H1 (cell line): ENCODE measurements at regions of chr9 and their contacts with region 1.

Region 1: GRCh38 chr9:121698627-121699570 is 47.5 kb downstream of the DAB2IP start:
- DNase-seq: peak in 1 of 2 experiments; percentile 86
- H3K4me3 ChIP-seq: peak overlapping the region; percentile 54 to 68 (median 61)
- H3K27ac ChIP-seq: no peak overlapping the region
- H3K4me1 ChIP-seq: peaks cover 4 to 13% (median 12%) of the 10 kb centered on the region in 4 experiments
- H3K27me3 ChIP-seq: peaks cover 0 to 5% (median 0%) of the 10 kb centered on the region in 4 experiments; a peak in 4 of 7 replicates
- CTCF ChIP-seq: no peak
- EP300 ChIP-seq: no peak
- POLR2A ChIP-seq: no peak
- RAD21 ChIP-seq: no peak

Region 2: DNA sequence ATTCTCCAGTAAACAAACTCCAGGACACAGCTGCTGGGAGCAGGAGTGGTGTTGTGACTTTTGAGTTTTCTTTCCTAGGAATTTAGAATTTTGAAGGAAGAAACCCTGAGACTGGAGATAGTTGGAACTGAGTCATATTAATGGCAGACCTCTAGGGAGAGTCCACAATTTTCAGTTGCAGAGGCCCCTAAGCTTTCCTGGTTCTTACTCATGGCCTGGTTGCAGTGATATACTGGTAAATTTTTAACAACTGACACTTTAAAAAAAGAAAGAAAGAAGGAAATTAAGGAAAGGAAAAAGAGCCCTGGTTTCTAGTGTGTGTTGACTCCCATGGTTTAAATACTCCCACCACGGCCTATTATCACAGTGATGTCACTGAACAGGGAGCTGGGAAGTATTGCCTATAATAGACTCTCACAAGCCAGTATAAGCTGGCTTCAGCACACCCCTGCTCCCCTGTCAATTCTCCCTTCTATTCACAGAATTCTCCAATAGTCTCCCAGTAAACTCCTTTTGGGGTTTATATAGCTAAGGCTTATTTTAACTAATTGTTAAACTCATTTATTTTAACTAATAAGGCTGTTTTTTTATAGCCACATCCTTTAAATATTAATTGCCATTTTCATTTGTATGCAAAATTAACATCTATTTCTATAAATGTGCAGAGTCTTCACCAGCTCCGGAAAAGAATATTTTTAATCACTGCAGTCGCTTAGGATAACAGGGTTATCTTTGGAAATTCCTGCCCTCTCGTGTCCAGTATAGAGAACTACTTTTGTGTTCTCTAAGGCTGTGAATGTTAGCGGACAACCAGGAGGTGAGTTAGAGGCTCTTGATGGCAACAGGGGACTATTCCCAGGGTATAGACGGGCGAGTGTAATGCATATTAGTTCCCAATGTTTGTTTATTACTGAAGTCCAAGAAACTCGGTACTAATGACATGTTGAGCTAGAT is 258.9 kb before region 1 on chr9:
- CTCF ChIA-PET with region 1: no interaction called
- POLR2A ChIA-PET with region 1: no interaction called
- DNase-seq: no peak
- H3K4me3 ChIP-seq: no peak overlapping the region
- H3K27ac ChIP-seq: no peak overlapping the region
- H3K4me1 ChIP-seq: no peaks in the 10 kb centered on the region
- H3K27me3 ChIP-seq: no peaks in the 10 kb centered on the region; a peak in 1 of 7 replicates
- CTCF ChIP-seq: peak in 2 of 3 experiments; percentile 6 to 20; a peak in 2 of 4 replicates
- EP300 ChIP-seq: no peak
- POLR2A ChIP-seq: no peak
- RAD21 ChIP-seq: peak in 1 of 2 experiments; percentile 40; a peak in 2 of 4 replicates

Region 3: GRCh38 chr9:121725008-121725775 is 26.3 kb after region 1 on chr9:
- CTCF ChIA-PET with region 1: interaction called, 24 read pairs
- POLR2A ChIA-PET with region 1: interaction called, 3 read pairs
- DNase-seq: no peak
- H3K4me3 ChIP-seq: no peak overlapping the region
- H3K27ac ChIP-seq: no peak overlapping the region
- H3K4me1 ChIP-seq: peaks cover 4 to 24% (median 11%) of the 10 kb centered on the region in 4 experiments
- H3K27me3 ChIP-seq: no peaks in the 10 kb centered on the region; a peak in 1 of 7 replicates
- CTCF ChIP-seq: no peak
- EP300 ChIP-seq: no peak
- POLR2A ChIP-seq: no peak
- RAD21 ChIP-seq: no peak